GM12878 (cell line): ENCODE measurements at regions of chr15 and their contacts with region 1.

Region 1: GRCh38 chr15:31285772-31286261 is 40.8 kb upstream of the KLF13 start:
- DNase-seq: peak; percentile 49
- ATAC-seq: peak; percentile 95
- H3K4me3 ChIP-seq: no peak overlapping the region
- H3K27ac ChIP-seq: peak overlapping the region; percentile 48
- H3K4me1 ChIP-seq: no peaks in the 10 kb centered on the region
- H3K27me3 ChIP-seq: no peaks in the 10 kb centered on the region
- CTCF ChIP-seq: no peak
- EP300 ChIP-seq: peak in 1 of 2 experiments; percentile 48; a peak in 1 of 4 replicates
- POLR2A ChIP-seq: no peak
- RAD21 ChIP-seq: no peak

Region 2: DNA sequence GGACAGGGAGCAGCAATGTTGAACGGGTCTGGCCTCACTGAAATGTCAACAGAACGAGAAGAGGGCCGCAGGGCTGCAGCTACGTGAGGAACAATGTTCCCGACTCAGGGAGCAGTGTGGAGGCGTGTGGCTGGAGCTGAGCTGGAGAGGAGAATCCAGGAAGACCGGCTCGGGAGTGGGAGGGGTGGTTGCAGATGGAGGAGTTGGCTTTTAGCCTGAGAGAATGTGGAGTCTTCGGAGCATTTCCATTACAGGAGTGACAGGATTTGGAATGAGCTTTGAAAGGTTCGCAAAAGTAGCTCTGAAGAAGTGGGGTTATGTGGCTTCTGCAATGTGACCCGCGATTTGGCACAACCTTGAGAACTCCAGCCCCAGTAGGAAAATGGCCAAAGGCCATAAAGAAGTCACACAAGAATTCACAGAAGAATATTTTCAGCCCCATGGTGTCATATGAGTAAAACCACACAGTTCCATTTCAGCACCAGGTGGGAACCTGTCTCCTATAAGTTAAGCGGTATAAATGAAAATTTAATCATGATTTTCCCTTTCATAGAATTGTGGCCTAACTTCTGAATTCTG is 1937.4 kb before region 1 on chr15:
- CTCF ChIA-PET with region 1: no interaction called
- POLR2A ChIA-PET with region 1: no interaction called
- RAD21 ChIA-PET with region 1: no interaction called
- SMC1A ChIA-PET with region 1: no interaction called
- in situ Hi-C with region 1: no loop called
- intact Hi-C with region 1: no loop called
- DNase-seq: no peak
- ATAC-seq: no peak
- H3K4me3 ChIP-seq: no peak overlapping the region
- H3K27ac ChIP-seq: no peak overlapping the region
- H3K4me1 ChIP-seq: no peaks in the 10 kb centered on the region
- H3K27me3 ChIP-seq: no peaks in the 10 kb centered on the region
- CTCF ChIP-seq: no peak
- EP300 ChIP-seq: no peak
- POLR2A ChIP-seq: no peak
- RAD21 ChIP-seq: no peak

Region 3: GRCh38 chr15:31069360-31070000 is 216.3 kb before region 1 on chr15:
- CTCF ChIA-PET with region 1: no interaction called
- POLR2A ChIA-PET with region 1: no interaction called
- RAD21 ChIA-PET with region 1: no interaction called
- SMC1A ChIA-PET with region 1: no interaction called
- in situ Hi-C with region 1: no loop called
- intact Hi-C with region 1: no loop called
- DNase-seq: no peak
- ATAC-seq: no peak
- H3K4me3 ChIP-seq: no peak overlapping the region
- H3K27ac ChIP-seq: no peak overlapping the region
- H3K4me1 ChIP-seq: no peaks in the 10 kb centered on the region
- H3K27me3 ChIP-seq: no peaks in the 10 kb centered on the region
- CTCF ChIP-seq: no peak
- EP300 ChIP-seq: no peak
- POLR2A ChIP-seq: no peak
- RAD21 ChIP-seq: no peak

Region 4: GRCh38 chr15:31272558-31273257 is 13.1 kb before region 1 on chr15:
- CTCF ChIA-PET with region 1: interaction called, 4 read pairs
- POLR2A ChIA-PET with region 1: interaction called, 6 read pairs
- RAD21 ChIA-PET with region 1: interaction called, 58 read pairs
- SMC1A ChIA-PET with region 1: interaction called, 13 read pairs
- in situ Hi-C with region 1: no loop called
- intact Hi-C with region 1: no loop called
- DNase-seq: no peak
- ATAC-seq: peak; percentile 27
- H3K4me3 ChIP-seq: no peak overlapping the region
- H3K27ac ChIP-seq: no peak overlapping the region
- H3K4me1 ChIP-seq: peaks cover 7% of the 10 kb centered on the region
- H3K27me3 ChIP-seq: no peaks in the 10 kb centered on the region
- CTCF ChIP-seq: no peak
- EP300 ChIP-seq: no peak
- POLR2A ChIP-seq: no peak
- RAD21 ChIP-seq: no peak

Region 5: DNA sequence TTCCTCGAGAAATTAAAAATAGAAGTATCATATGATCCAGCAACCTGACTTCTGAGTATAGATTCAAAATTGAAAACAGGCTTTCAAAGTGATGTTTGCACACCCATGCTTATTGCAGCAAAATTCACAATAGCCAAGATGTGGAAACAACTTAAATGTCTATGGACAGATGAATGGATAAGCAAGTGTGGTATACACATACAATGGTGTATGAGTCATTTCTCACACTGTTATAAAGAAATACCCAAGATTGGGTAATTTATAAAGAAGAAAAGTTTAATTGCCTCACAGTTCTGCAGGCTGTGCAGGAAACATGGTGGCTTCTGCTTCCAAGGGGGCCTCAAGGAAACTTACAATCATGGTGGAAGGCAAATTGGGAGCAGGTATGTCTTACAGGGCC is 141.6 kb after region 1 on chr15:
- CTCF ChIA-PET with region 1: no interaction called
- POLR2A ChIA-PET with region 1: no interaction called
- RAD21 ChIA-PET with region 1: no interaction called
- SMC1A ChIA-PET with region 1: no interaction called
- in situ Hi-C with region 1: no loop called
- intact Hi-C with region 1: no loop called
- DNase-seq: no peak
- ATAC-seq: no peak
- H3K4me3 ChIP-seq: no peak overlapping the region
- H3K27ac ChIP-seq: no peak overlapping the region
- H3K4me1 ChIP-seq: no peaks in the 10 kb centered on the region
- H3K27me3 ChIP-seq: no peaks in the 10 kb centered on the region
- CTCF ChIP-seq: no peak
- EP300 ChIP-seq: no peak
- POLR2A ChIP-seq: no peak
- RAD21 ChIP-seq: no peak